Posterior vena cava (tissue), 2 donors: ENCODE measurements at regions of chr17 and their contacts with region 1.

Region 1: DNA sequence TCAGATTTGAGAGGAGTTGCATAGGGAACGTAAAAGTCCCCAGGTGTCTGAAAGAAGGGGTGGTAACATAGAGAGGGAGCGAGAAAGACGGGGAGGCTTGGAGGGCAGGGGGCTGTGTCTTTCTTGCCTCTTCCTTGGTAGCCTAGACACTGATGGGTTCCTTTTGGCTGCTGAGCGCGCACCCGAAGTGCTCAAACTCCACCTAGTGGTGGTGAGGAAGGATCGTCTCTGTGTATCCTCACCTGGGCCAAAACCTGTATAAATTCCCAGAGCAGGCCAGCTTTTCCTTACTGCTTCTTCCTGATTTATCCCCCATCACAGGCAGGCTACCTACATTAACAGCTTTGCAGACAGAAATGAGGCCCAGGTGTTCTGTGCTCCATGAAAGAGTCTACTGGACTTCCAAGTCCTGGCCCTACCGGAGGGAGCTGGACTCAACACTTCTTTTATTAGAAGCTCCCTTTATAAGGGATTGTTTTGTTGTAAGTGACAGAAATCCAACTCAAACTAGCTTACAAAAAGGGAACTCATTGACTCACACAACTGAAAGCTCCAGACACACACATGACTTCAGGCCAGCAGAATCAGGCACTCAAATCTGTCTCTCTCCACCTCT is 5.5 kb upstream of the SLC25A35 start:
- DNase-seq: no peak

Region 2: GRCh38 chr17:7394452-7395191 is 906.1 kb before region 1 on chr17 and contains the start of gene PLSCR3:
- intact Hi-C with region 1: loop called in 1 of 2 experiments (anchors 5 kb)
- DNase-seq: peak; percentile 96
- total RNA-seq, gene PLSCR3: 31.8 to 37.6 TPM

Region 3: GRCh38 chr17:8079291-8080207 is 221.2 kb before region 1 on chr17:
- intact Hi-C with region 1: loop called in 1 of 2 experiments (anchors 10 kb)
- DNase-seq: peak; percentile 92

Region 4: GRCh38 chr17:8275421-8276290 is 25.1 kb before region 1 on chr17:
- intact Hi-C with region 1: no loop called
- DNase-seq: no peak